CD8-positive, alpha-beta memory T cell (primary cell): ENCODE measurements at regions of chr1 and their contacts with region 1.

Region 1: DNA sequence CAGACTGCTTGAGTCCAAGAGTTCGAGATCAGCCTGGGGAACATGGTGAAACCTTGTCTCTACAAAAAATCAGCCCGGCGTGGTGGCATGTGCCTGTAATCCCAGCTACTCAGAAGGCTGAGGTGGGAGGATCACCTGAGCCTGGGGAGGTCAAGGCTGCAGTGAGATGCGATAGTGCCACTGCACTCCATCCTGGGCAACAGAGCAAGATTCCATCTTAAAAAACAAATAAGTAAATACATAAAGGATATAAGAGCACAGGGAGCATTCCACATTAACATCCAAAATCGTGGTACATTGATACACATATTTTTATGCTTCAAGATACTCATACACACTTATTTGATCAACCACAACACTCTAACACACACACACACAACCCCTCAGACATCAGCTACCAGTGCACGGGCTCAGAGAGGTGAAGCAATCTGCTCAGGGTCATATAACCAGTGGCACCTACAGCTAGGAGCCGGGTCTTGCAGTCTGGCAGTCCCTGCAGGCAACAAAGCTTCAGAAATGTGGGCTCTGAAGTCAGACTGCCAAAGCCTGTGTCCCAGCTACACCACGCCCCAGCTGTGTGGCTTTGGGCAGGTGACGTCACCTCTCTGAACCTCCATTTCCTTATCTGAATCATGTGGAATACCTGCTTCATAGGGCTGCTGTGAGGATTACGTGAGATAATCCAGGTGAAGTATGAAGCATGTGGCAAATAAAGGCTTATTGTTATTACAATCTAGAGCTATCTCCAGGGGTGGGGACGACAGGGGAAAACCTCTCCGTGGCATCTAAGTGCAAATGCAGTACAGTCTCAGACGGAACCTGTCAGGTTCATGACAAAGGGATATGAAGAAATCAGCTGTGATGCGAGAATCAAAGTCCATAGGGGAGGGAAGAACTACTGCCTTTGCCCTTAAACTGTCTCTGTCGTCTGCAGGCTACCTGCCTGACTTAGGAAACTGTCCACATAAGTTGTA is 4.8 kb upstream of the CRYBG2 start:
- DNase-seq: peak; percentile 61 to 87 (median 75)
- H3K4me3 ChIP-seq: peak overlapping the region; percentile 23
- H3K4me3 Mint-ChIP-seq: peak overlapping the region; percentile 60 to 84 (median 69)
- H3K27ac ChIP-seq: no peak overlapping the region
- H3K27ac Mint-ChIP-seq: peak overlapping the region; percentile 61 to 91 (median 78)
- H3K4me1 ChIP-seq: peaks cover 36% of the 10 kb centered on the region
- H3K4me1 Mint-ChIP-seq: peaks cover 44 to 60% (median 47%) of the 10 kb centered on the region in 3 donors
- H3K27me3 ChIP-seq: peaks cover 14% of the 10 kb centered on the region
- H3K27me3 Mint-ChIP-seq: peaks cover 11 to 21% of the 10 kb centered on the region in 2 donors

Region 2: GRCh38 chr1:26373281-26373680 is 14.6 kb after region 1 on chr1:
- CTCF ChIA-PET with region 1: interaction called, 144 read pairs
- POLR2A ChIA-PET with region 1: interaction called, 13 read pairs
- DNase-seq: peak; percentile 27 to 69 (median 51)
- H3K4me3 ChIP-seq: peak overlapping the region; percentile 3
- H3K4me3 Mint-ChIP-seq: peak overlapping the region; percentile 1 to 71 (median 55)
- H3K27ac ChIP-seq: no peak overlapping the region
- H3K27ac Mint-ChIP-seq: peak overlapping the region; percentile 48 to 93 (median 80)
- H3K4me1 ChIP-seq: peaks cover 90% of the 10 kb centered on the region
- H3K4me1 Mint-ChIP-seq: peaks cover 81 to 92% (median 90%) of the 10 kb centered on the region in 3 donors
- H3K27me3 ChIP-seq: no peaks in the 10 kb centered on the region
- H3K27me3 Mint-ChIP-seq: peaks cover 0 to 1% of the 10 kb centered on the region in 2 donors

Region 3: GRCh38 chr1:26378088-26378878 is 19.6 kb after region 1 on chr1:
- CTCF ChIA-PET with region 1: interaction called, 144 read pairs
- POLR2A ChIA-PET with region 1: interaction called, 13 read pairs
- DNase-seq: peak; percentile 79 to 95 (median 81)
- H3K4me3 ChIP-seq: peak overlapping the region; percentile 47
- H3K4me3 Mint-ChIP-seq: peak overlapping the region; percentile 46 to 85 (median 75)
- H3K27ac ChIP-seq: peak overlapping the region; percentile 75
- H3K27ac Mint-ChIP-seq: peak overlapping the region; percentile 80 to 97 (median 94)
- H3K4me1 ChIP-seq: peaks cover 70% of the 10 kb centered on the region
- H3K4me1 Mint-ChIP-seq: peaks cover 67 to 79% (median 71%) of the 10 kb centered on the region in 3 donors
- H3K27me3 ChIP-seq: no peaks in the 10 kb centered on the region
- H3K27me3 Mint-ChIP-seq: peaks cover 0 to 3% of the 10 kb centered on the region in 2 donors